ENCODE measurements at regions of chr12 and their contacts with region 1.

Region 1: DNA sequence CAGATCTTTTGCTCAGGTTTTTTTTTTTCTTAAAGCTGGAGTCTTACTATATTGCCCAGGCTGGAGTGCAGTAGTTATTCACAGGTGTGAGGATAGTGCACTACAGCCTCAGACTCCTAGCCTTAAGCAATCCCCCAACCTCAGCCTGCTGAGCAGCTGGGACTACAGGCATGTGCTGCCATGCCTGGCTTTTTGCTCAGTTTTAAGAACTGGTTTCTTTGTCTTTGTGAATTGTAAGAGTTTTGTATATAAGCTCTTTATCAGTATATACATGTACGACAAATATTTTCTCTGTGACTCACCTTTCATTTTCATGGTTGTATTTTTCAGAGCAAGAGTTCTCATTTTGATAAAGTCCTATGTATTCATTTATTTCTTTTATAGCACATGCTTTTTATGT is 33.3 kb upstream of the C2CD5 start:
- DNase-seq: no peak
- H3K4me3 ChIP-seq: no peak overlapping the region
- H3K4me3 Mint-ChIP-seq: no peak overlapping the region
- H3K27ac Mint-ChIP-seq: no peak overlapping the region
- H3K4me1 ChIP-seq: peaks cover 6% of the 10 kb centered on the region
- H3K4me1 Mint-ChIP-seq: no peaks in the 10 kb centered on the region
- H3K27me3 ChIP-seq: no peaks in the 10 kb centered on the region
- H3K27me3 Mint-ChIP-seq: no peaks in the 10 kb centered on the region
- CTCF ChIP-seq: no peak

Region 2: DNA sequence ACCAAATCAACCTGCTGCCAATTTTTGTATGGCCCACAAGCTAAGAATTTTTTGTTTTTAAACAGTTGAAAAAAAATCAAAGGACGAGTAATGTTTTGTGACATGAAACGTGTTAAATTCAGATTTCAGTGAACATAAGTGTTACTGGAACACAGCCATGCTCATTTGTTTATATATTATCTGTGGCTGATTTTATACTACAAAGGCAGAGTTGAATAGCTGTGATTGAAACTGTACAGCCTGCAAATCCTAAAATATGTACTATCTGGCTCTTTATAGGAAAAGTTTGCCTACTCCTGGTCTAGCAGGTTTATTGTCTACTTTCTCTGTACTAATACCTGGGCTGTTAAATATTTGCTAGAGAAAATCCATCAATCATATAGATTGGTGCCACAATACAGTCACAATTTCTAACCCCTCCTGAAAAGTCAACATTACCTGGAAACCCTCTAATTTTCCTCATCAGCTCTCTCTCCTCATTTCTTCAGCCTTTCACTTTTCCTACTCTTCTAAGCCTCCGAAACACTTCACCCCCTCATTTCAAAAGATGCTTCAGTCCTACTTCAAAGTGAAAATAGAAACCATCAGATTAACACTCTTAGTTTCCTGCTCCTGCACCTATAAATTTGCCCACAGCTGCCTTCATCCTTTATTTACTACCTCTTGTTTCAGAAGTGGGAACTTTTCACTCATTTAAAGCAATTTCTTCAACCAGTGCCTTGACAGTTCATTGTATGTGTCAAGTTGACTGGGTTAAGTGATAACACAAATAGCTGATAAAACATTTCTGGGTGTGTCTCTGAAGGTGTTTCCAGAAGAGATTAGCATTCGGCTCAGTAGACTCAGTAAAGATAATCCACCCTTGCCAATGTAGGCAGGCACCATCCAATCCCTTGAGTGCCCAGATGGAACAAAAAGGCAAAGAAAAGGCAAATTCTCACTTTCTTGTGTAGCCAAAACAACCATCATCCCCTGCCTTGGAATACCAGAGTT is 15.3 kb before region 1 on chr12:
- CTCF ChIA-PET with region 1: no interaction called
- POLR2A ChIA-PET with region 1: no interaction called
- intact Hi-C with region 1: loop called (anchors 2 kb)
- DNase-seq: peak in 1 of 2 experiments; percentile 45
- H3K4me3 ChIP-seq: no peak overlapping the region
- H3K4me3 Mint-ChIP-seq: peak overlapping the region; percentile 8
- H3K27ac Mint-ChIP-seq: peak overlapping the region; percentile 15
- H3K4me1 ChIP-seq: peaks cover 28% of the 10 kb centered on the region
- H3K4me1 Mint-ChIP-seq: peaks cover 31% of the 10 kb centered on the region
- H3K27me3 ChIP-seq: no peaks in the 10 kb centered on the region
- H3K27me3 Mint-ChIP-seq: no peaks in the 10 kb centered on the region
- CTCF ChIP-seq: no peak

Region 3: GRCh38 chr12:22598141-22598762 is 20.6 kb after region 1 on chr12:
- CTCF ChIA-PET with region 1: no interaction called
- POLR2A ChIA-PET with region 1: no interaction called
- intact Hi-C with region 1: loop called (anchors 2 kb)
- DNase-seq: no peak
- H3K4me3 ChIP-seq: no peak overlapping the region
- H3K4me3 Mint-ChIP-seq: no peak overlapping the region
- H3K27ac Mint-ChIP-seq: no peak overlapping the region
- H3K4me1 ChIP-seq: peaks cover 8% of the 10 kb centered on the region; the same call in 1 of the 2 replicates
- H3K4me1 Mint-ChIP-seq: peaks cover 6% of the 10 kb centered on the region
- H3K27me3 ChIP-seq: no peaks in the 10 kb centered on the region
- H3K27me3 Mint-ChIP-seq: peaks cover 4% of the 10 kb centered on the region
- CTCF ChIP-seq: no peak

Measured in Caco-2 (cell line).